BJ (cell line): ENCODE measurements at regions of chr5 and their contacts with region 1.

Region 1: GRCh38 chr5:141878711-141879425 is 658 bp upstream of the PCDH1 start:
- DNase-seq: peak; percentile 26
- H3K4me3 ChIP-seq: peak overlapping the region; percentile 14
- H3K27me3 ChIP-seq: peaks cover 63% of the 10 kb centered on the region
- CTCF ChIP-seq: peak; percentile 98

Region 2: DNA sequence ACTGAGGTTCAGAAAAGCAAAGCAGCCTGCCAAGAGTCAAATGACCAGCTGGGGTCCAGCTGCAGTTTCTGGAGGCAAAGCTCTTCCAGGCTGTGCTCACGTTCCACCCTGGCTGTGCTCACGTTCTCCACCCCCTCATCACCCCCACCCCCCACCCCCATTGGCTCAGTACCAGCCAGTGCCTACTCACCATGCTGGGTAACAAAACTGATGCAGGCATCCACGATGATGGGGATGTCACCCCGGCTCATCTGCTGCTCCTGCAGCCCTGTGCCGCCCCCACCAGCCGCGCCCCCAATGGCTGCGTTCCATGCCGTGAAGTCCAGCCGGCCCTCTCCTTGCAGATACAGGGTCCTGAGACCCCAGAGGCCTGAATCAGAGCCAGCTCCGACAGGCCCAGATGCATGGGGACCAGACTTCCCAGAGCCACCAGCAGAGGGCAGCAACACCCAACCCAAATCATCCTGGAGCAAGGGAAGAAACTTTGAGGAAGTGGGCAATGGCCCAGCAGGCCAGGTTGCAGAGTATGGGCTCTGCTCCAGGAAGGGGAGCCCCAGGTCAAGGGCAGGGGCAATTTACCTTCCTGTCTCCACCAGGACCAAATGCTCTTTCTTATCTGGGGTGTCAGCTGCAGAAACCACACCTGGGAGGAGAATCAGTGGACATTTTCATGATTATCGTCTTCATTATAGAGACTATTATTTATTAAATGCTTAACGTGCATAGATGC is 214.0 kb before region 1 on chr5:
- CTCF ChIA-PET with region 1: interaction called, 34 read pairs
- POLR2A ChIA-PET with region 1: no interaction called
- DNase-seq: no peak
- H3K4me3 ChIP-seq: no peak overlapping the region
- H3K27me3 ChIP-seq: no peaks in the 10 kb centered on the region
- CTCF ChIP-seq: peak; percentile 96

Region 3: DNA sequence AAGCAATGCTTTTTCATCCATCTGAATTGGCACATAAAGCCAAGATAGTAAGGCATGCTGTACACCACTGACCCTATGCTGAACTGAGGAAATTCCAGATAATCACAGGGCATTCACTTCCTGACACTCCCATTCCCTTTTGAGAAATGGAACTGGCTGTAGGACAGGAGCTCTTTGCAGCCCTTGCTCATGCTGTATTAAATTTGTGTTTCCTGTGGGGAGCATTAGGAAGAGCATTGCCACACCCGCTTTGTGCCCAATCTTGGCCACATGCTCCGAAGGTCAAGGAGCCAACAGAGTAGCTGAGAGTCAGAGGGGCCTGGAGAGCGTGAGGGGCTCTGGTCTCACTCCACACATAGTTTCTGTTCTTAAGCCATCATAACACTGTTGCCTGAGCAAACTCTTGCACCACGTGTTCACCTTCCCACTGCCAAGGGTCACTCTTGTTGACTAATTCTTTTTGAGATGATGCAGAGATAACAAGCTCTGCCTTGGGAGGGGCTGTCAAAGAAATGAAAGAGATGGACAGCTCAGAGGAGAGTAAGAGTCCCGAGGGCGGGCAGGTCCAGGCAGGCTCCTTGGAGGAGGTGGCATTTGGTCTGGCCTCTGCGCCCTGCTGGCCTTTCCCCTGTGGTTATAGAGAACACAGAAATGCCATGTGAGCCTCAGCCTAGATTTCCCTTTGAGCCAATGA is 165.1 kb before region 1 on chr5:
- CTCF ChIA-PET with region 1: interaction called, 13 read pairs
- POLR2A ChIA-PET with region 1: no interaction called
- DNase-seq: no peak
- H3K4me3 ChIP-seq: no peak overlapping the region
- H3K27me3 ChIP-seq: peaks cover 15% of the 10 kb centered on the region
- CTCF ChIP-seq: no peak

Region 4: GRCh38 chr5:141778206-141778605 is 100.7 kb before region 1 on chr5:
- CTCF ChIA-PET with region 1: interaction called, 10 read pairs
- POLR2A ChIA-PET with region 1: no interaction called
- DNase-seq: no peak
- H3K4me3 ChIP-seq: no peak overlapping the region
- H3K27me3 ChIP-seq: peaks cover 8% of the 10 kb centered on the region
- CTCF ChIP-seq: no peak

Region 5: DNA sequence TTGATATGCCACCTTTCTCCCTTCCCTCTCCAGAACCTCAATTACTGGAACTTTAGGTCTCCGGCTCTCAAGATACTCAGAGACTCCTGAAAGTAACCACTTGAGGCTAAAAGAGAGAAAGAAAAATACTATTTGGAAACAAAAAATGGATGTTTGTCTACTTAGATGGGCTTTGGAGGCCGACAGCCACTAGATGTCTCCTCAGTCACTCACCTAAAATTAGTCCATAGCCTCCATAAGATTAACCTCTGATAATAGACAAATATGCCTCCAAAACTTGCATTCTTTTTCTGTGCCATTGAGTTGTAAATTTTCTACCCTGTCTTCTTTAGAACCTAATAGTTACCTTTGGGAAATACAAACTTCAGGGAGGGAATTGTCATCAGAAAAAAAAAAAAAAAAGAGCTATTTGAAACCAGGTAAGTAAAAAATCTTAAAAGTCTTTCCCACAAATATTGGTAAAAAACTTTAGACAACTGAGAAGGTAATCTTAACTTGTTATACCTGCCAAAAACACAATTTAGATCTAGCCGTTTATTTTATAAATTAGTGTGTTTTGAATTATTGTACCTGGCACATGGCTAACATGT is 10.5 kb after region 1 on chr5:
- CTCF ChIA-PET with region 1: interaction called, 32 read pairs
- POLR2A ChIA-PET with region 1: no interaction called
- DNase-seq: no peak
- H3K4me3 ChIP-seq: no peak overlapping the region
- H3K27me3 ChIP-seq: no peaks in the 10 kb centered on the region
- CTCF ChIP-seq: peak; percentile 61

Region 6: DNA sequence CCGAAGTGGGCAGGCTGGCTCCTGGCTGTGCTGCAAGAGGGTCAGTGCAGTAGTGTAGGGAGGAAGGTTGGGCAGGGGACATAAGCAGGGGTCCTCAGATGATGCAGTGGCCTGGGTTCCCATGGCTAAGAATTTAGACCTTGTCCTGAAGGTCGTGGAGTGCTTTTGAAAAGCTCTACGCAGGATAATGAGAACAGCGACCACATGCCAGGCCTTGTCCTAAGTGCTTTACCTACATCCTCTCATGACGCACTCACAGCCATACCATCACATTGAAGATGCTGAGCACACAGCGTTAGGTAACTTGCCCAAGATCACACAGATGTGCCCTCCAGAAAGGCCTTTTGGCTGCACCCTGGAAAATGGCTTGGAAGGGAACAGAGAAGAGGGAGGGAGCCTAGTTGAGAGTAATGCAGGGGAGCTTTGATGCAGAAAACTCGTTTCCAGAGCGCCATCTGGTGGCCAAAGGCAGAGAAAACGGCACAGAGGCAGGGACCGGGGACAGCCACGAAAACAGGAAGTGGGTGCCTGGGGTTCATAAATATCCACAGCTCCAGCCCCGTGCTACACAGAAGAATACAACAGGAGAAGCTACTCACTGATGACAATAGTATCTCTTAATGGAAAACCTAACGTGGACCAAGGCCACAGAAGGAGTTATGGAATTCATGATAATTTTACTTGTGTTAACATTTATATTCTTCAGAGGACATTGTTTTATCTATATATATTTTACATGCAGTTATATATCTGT is 81.8 kb after region 1 on chr5:
- CTCF ChIA-PET with region 1: interaction called, 89 read pairs
- POLR2A ChIA-PET with region 1: no interaction called
- DNase-seq: no peak
- H3K4me3 ChIP-seq: no peak overlapping the region
- H3K27me3 ChIP-seq: no peaks in the 10 kb centered on the region
- CTCF ChIP-seq: peak; percentile 82